Breast epithelium (tissue), 4 donors: ENCODE measurements at regions of chr20 and their contacts with region 1.

Region 1: DNA sequence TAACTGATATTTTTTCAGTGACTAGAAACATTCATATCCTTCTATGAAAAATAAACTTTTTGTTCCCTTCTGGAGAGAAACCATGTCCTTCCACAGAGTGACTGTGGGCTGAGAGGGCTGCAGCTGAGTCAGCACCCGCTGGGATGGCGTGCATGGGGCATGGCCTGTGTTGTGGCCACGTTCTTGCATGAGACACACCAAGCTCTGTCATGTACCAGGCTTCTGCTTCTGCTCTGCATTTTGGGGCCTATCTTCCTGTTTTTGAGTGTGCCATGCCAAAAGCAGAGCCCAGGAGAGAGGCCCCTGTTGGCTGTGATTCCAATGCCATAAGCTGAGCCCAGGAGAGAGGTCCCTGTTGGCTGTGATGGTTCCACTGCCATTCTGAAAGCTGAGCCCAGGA is 10.8 kb downstream of the APMAP start:
- DNase-seq: no peak
- H3K4me3 ChIP-seq: no peak overlapping the region
- H3K27ac ChIP-seq: no peak overlapping the region
- H3K4me1 ChIP-seq: no peaks in the 10 kb centered on the region
- H3K27me3 ChIP-seq: no peaks in the 10 kb centered on the region
- CTCF ChIP-seq: no peak
- POLR2A ChIP-seq: no peak

Region 2: GRCh38 chr20:23568320-23568970 is 1413.3 kb before region 1 on chr20 and contains the start of gene CST9L:
- intact Hi-C with region 1: no loop called
- DNase-seq: no peak
- H3K4me3 ChIP-seq: no peak within 1 kb of the TSS
- H3K27ac ChIP-seq: no peak within 1 kb of the TSS
- H3K4me1 ChIP-seq: no peaks in the 10 kb centered on the region
- H3K27me3 ChIP-seq: no peaks in the 10 kb centered on the region
- CTCF ChIP-seq: no peak
- POLR2A ChIP-seq: no peak
- total RNA-seq, gene CST9L: not detected

Region 3: DNA sequence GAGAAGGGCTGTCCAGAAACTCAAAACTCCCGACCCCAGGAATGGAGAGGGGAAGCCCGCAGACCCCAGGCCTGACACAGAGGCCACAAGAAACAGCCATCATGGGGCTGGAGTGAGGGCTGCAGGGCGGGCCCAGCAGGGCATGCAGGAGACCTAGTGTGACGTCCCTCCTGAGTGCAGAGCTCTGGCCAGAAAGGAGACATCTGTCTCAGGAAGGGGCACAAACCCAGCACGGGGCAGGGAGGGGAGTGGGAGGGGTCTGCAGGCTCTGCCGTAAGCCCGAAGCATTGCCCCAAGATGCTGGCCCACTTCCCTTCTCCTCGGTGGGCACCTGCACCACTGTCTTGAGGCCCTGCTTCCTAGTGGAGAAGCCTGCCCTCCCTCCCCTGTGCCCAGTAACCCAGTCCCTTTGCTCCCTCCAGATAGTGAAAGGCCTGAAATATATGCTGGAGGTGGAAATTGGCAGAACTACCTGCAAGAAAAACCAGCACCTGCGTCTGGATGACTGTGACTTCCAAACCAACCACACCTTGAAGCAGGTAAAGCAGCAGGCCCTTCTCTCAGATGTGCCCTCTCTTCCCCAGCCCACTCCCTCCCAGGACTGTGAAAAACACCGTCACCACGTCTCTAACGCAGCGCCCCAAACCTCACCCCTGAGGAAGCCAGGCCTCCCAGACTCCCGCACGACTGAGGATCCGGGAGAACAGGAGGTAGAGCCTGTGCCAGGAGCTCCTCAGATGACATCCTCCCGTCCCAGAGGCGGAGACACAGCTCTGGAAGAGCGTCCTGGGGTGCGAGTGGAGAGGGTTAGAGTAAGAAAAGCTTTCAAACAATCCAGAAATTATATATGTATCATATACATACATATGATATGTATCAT is 23.0 kb before region 1 on chr20:
- intact Hi-C with region 1: loop called (anchors 1 kb)
- DNase-seq: no peak
- H3K4me3 ChIP-seq: no peak overlapping the region
- H3K27ac ChIP-seq: no peak overlapping the region
- H3K4me1 ChIP-seq: no peaks in the 10 kb centered on the region
- H3K27me3 ChIP-seq: no peaks in the 10 kb centered on the region
- CTCF ChIP-seq: no peak
- POLR2A ChIP-seq: no peak